ENCODE measurements at regions of chr6 and their contacts with region 1.

Region 1: DNA sequence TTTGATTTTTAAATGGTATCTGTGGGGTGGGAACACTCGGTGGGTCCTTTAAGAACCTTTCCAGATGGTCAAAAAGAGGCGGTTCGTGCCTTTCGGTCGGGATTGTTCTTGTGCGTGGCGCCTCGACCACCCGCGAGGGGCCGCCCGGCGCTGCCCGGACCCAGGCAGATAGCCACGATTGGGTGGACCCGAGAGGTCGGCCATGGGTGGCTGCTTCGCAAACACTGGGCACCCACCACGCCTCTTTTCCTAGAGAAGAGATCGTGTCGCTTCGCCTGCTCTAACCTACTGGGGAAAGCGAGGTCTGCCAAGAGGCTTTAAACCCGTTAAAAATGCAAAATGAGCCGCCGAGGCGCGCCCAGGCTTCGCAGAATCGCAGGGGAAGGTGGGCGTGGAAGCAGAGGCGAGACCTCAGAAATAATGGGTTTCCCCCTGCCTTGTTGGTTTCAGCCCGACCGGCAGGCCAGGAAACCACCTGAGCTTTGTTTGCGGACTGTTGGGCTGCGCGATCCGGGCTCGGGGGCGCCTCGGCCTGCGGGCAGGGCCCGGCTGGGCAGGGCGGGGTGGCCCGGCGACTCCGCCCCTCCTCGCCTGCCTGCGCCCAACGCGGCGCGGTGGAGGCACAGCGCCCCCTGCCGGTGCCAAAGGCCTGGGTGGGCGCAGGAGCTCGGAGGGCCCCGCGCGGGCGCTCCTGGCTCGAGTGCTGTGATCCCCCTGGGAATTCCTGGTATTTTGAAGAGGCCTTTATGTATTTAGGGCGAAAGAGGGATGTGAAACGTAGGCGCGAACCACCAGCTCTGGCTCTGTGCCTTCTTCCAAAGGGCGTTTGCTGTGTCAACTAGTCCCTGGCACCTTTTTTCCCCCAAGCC is 1.6 kb downstream of the MARCKS start:
- DNase-seq: peak; percentile 98
- CTCF ChIP-seq: peak; percentile 85

Region 2: GRCh38 chr6:113306552-113307145 is 552.1 kb before region 1 on chr6:
- in situ Hi-C with region 1: loop called (anchors 10 kb)
- DNase-seq: peak; percentile 12
- CTCF ChIP-seq: peak; percentile 77

Region 3: GRCh38 chr6:113632220-113632864 is 226.4 kb before region 1 on chr6:
- in situ Hi-C with region 1: loop called (anchors 10 kb)
- DNase-seq: no peak
- CTCF ChIP-seq: no peak

Measured in GM13977 (cell line).